ENCODE measurements at regions of chr12 and their contacts with region 1.

Region 1: GRCh38 chr12:108063192-108063591 is 65.9 kb upstream of the WSCD2 start:
- DNase-seq: no peak
- H3K4me3 Mint-ChIP-seq: no peak overlapping the region
- H3K27ac Mint-ChIP-seq: no peak overlapping the region
- H3K4me1 Mint-ChIP-seq: no peaks in the 10 kb centered on the region
- H3K27me3 Mint-ChIP-seq: no peaks in the 10 kb centered on the region

Region 2: GRCh38 chr12:107903341-107904061 is 159.7 kb before region 1 on chr12:
- intact Hi-C with region 1: no loop called
- DNase-seq: peak; percentile 63
- H3K4me3 Mint-ChIP-seq: peak overlapping the region; percentile 84
- H3K27ac Mint-ChIP-seq: peak overlapping the region; percentile 70
- H3K4me1 Mint-ChIP-seq: peaks cover 18% of the 10 kb centered on the region
- H3K27me3 Mint-ChIP-seq: peaks cover 55% of the 10 kb centered on the region

Region 3: GRCh38 chr12:108156717-108157116 is 93.5 kb after region 1 on chr12:
- intact Hi-C with region 1: no loop called
- DNase-seq: no peak
- H3K4me3 Mint-ChIP-seq: no peak overlapping the region
- H3K27ac Mint-ChIP-seq: no peak overlapping the region
- H3K4me1 Mint-ChIP-seq: no peaks in the 10 kb centered on the region
- H3K27me3 Mint-ChIP-seq: no peaks in the 10 kb centered on the region

Region 4: GRCh38 chr12:108193917-108194316 is 130.7 kb after region 1 on chr12:
- intact Hi-C with region 1: loop called (anchors 10 kb)
- DNase-seq: no peak
- H3K4me3 Mint-ChIP-seq: no peak overlapping the region
- H3K27ac Mint-ChIP-seq: no peak overlapping the region
- H3K4me1 Mint-ChIP-seq: no peaks in the 10 kb centered on the region
- H3K27me3 Mint-ChIP-seq: no peaks in the 10 kb centered on the region

Measured in activated T-helper 2 cell treated with anti-CD3 and anti-CD28 coated beads, Interferon-gamma antibody, Interleukin-2, Interleukin-4, amounts not matched to agents 10 μg/mL and 5 μg/mL and 100 μg/mL, durations not matched to agents 14 hours and 24 hours and 36 hours (primary cell).